ENCODE measurements at regions of chr20 and their contacts with region 1.

Region 1: GRCh38 chr20:63739130-63740069 is at the start of gene SLC2A4RG:
- DNase-seq: peak; percentile 50 to 80 (median 68)
- ATAC-seq: peak; percentile 15 to 25
- H3K4me3 Mint-ChIP-seq: peak within 1 kb of the TSS; percentile 36 to 95 (median 66)
- H3K27ac Mint-ChIP-seq: peak within 1 kb of the TSS in 5 of 10 donors; percentile 27 to 67 (median 52)
- H3K4me1 Mint-ChIP-seq: peaks cover 12 to 21% (median 19%) of the 10 kb centered on the region in 4 donors
- H3K27me3 Mint-ChIP-seq: no peaks in the 10 kb centered on the region
- polyA plus RNA-seq, gene SLC2A4RG: 3.8 to 4.8 (median 4.7) TPM

Region 2: GRCh38 chr20:63627129-63627750 is 112.2 kb before region 1 on chr20:
- POLR2A ChIA-PET with region 1: interaction called, 22 read pairs
- DNase-seq: peak; percentile 90 to 99 (median 95)
- ATAC-seq: peak; percentile 82 to 83
- H3K4me3 Mint-ChIP-seq: peak overlapping the region; percentile 91 to 99 (median 98)
- H3K27ac Mint-ChIP-seq: peak overlapping the region; percentile 43 to 99 (median 96)
- H3K4me1 Mint-ChIP-seq: peaks cover 16 to 59% (median 45%) of the 10 kb centered on the region in 4 donors
- H3K27me3 Mint-ChIP-seq: no peaks in the 10 kb centered on the region

Region 3: DNA sequence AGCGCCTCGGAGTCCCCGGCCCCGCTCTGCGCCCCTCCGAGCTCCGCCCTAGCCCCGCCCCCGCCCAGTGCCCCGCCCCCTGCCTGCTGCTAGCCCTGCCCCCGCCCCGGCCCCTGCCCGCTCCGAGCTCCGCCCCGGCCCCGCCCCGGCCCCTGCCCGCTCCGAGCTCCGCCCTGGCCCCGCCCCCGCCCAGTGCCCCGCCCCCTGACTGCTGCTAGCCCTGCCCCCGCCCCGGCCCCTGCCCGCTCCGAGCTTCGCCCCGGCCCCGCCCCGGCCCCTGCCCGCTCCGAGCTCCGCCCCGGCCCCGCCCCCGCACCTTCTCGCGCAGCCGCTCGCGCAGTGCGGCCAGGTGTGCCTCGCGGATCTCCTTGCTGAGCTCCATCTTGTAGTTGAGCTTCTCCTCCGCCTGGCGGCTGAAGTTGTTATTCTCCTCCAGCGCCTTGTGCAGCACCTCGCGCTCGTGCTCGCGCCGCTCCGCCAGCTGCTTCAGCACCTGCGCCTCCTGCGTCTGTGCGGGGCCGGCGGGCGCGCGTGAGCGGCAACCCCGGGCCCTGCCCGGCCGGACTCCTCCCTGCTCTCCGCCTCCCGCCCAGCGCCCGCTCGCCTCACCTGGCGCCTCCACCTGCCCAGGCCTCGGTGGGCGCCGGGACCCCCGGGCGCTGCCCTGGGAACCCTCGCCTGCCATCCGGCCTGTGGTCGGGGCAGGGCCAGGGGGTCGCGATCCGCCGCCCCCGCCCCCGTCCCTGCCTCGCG is 97.4 kb before region 1 on chr20:
- POLR2A ChIA-PET with region 1: interaction called, 37 read pairs
- DNase-seq: peak; percentile 87 to 99 (median 98)
- ATAC-seq: peak; percentile 68 to 70
- H3K4me3 Mint-ChIP-seq: peak overlapping the region; percentile 46 to 93 (median 74)
- H3K27ac Mint-ChIP-seq: peak overlapping the region in 8 of 10 donors; percentile 37 to 94 (median 83)
- H3K4me1 Mint-ChIP-seq: peaks cover 23 to 40% (median 38%) of the 10 kb centered on the region in 4 donors
- H3K27me3 Mint-ChIP-seq: no peaks in the 10 kb centered on the region

Region 4: GRCh38 chr20:63707549-63708300 is 31.7 kb before region 1 on chr20 and contains the starts of genes ARFRP1 and ZGPAT:
- POLR2A ChIA-PET with region 1: interaction called, 162 read pairs
- DNase-seq: peak; percentile 70 to 88 (median 84)
- ATAC-seq: peak; percentile 81 to 83
- H3K4me3 Mint-ChIP-seq: peak within 1 kb of the TSS; percentile 84 to 95 (median 90)
- H3K27ac Mint-ChIP-seq: peak within 1 kb of the TSS; percentile 88 to 95 (median 92)
- H3K4me1 Mint-ChIP-seq: peaks cover 27 to 60% (median 54%) of the 10 kb centered on the region in 4 donors
- H3K27me3 Mint-ChIP-seq: no peaks in the 10 kb centered on the region
- polyA plus RNA-seq, gene ARFRP1: 60.1 to 92.1 (median 80.9) TPM
- polyA plus RNA-seq, gene ZGPAT: 42.3 to 73.8 (median 47.1) TPM

Region 5: DNA sequence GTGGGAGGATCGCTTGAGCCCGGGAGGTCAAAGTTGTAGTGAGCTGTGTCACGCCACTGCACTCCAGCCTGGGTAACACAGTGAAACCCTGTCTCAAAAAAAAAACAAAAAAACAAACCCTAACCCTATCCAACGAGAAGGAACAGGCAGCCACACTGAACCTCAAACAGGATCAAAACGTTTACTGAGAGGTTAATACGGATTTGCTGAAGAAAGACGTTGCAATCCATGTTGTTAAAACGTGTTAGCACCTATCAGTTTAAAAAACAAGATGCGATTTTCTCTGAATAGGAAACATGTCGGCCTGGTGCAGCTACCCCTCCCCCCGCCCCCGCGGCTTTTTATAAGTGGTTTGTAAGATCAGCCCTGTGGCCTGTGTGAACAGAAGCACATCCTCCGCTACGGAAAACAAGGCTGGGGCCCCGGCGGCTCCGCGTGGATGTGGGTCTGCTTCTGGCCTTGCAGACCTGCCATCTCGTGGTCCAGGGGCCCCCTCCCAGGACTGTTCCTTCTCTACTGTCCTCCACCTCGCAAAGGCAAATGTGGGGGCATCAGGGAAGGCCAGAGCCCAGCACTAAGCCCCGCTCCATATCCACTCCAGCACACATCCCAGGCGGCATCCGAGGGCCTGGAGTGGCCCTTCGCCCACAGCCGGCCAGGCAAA is 11.5 kb after region 1 on chr20:
- POLR2A ChIA-PET with region 1: interaction called, 137 read pairs
- DNase-seq: peak; percentile 45 to 86 (median 58)
- ATAC-seq: peak; percentile 93
- H3K4me3 Mint-ChIP-seq: peak overlapping the region; percentile 67 to 86 (median 78)
- H3K27ac Mint-ChIP-seq: peak overlapping the region in 9 of 10 donors; percentile 84 to 98 (median 94)
- H3K4me1 Mint-ChIP-seq: peaks cover 16 to 48% (median 35%) of the 10 kb centered on the region in 4 donors
- H3K27me3 Mint-ChIP-seq: no peaks in the 10 kb centered on the region

Region 6: DNA sequence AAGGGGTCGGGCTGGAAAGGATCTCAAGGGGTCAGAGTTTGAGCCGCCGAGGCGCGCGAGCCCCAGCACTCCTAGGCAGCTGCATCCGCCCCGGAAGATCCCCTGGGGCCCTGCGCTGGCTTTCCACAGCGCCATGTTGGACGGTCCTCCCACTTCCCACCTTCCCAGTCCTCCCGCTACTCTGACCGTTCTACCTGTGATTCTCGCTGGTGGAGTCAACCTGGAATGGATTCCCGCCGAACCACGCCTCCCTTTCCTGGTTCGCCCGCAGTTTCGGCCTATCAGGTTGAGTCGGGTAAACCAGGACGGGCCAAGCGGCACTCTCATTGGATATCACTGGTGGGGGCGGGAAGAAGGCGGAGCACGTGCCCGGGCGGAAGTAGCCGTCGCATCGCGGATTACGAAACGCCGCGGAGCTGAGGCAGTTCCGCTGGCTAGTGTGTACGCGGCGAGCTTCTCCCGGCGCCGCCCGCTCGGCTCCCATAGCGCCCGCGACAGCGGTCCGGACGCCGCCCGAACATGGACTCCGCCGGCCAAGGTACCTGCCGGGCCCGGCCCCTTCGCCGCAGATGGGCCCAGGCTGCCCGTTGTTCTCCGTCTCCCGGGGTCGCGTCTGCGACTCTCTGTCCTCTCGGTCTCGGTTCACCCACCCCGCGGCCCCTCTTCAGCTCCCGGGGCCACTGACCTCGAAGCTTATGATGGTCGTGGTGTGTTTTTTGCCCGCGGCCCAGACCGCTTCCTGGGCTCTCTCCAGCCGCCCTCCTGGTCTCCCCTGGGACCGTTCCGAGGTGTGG is 125.6 kb after region 1 on chr20 and contains the start of gene TPD52L2:
- POLR2A ChIA-PET with region 1: interaction called, 14 read pairs
- DNase-seq: peak; percentile 90 to 98 (median 96)
- ATAC-seq: peak; percentile 88 to 90
- H3K4me3 Mint-ChIP-seq: peak within 1 kb of the TSS; percentile 87 to 99 (median 96)
- H3K27ac Mint-ChIP-seq: peak within 1 kb of the TSS; percentile 93 to 99 (median 95)
- H3K4me1 Mint-ChIP-seq: peaks cover 18 to 40% (median 37%) of the 10 kb centered on the region in 4 donors
- H3K27me3 Mint-ChIP-seq: no peaks in the 10 kb centered on the region
- polyA plus RNA-seq, gene TPD52L2: 56.4 to 79.0 (median 68.3) TPM

Measured in naive thymus-derived CD8-positive, alpha-beta T cell (primary cell).